Activated CD4-positive, alpha-beta T cell treated with anti-CD3 and anti-CD28 coated beads for 36 hours (primary cell): ENCODE measurements at regions of chr5 and their contacts with region 1.

Region 1: GRCh38 chr5:143002459-143003328 is 232.5 kb downstream of the ARHGAP26 start:
- DNase-seq: peak; percentile 78
- ATAC-seq: peak; percentile 92
- H3K4me3 Mint-ChIP-seq: peak overlapping the region; percentile 17
- H3K27ac Mint-ChIP-seq: peak overlapping the region; percentile 93
- H3K4me1 Mint-ChIP-seq: peaks cover 50% of the 10 kb centered on the region
- H3K27me3 Mint-ChIP-seq: no peaks in the 10 kb centered on the region

Region 2: GRCh38 chr5:142342128-142342981 is 660.3 kb before region 1 on chr5:
- CTCF ChIA-PET with region 1: no interaction called
- POLR2A ChIA-PET with region 1: no interaction called
- intact Hi-C with region 1: no loop called
- DNase-seq: no peak
- ATAC-seq: no peak
- H3K4me3 Mint-ChIP-seq: no peak overlapping the region
- H3K27ac Mint-ChIP-seq: no peak overlapping the region
- H3K4me1 Mint-ChIP-seq: no peaks in the 10 kb centered on the region
- H3K27me3 Mint-ChIP-seq: no peaks in the 10 kb centered on the region

Region 3: DNA sequence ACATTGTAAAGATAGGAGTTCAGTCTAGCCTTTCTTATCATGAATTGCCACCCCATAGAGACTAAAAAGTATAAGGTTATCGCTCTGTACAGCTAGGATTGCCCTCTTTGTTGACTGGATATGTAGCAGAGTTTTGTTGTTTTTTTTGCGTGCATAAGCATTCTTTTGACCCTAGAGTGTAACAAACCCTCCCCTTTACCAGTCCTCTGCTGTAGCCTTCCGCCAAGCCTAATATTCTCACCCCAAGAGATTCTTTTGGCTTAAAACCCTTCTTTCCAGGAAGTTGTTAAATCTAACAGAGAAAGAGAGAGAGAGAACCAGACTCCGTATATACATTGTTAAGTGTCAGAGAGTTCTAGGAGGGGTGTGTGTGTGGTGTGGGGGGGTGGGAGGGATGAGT is 430.7 kb before region 1 on chr5:
- CTCF ChIA-PET with region 1: no interaction called
- POLR2A ChIA-PET with region 1: no interaction called
- intact Hi-C with region 1: no loop called
- DNase-seq: no peak
- ATAC-seq: no peak
- H3K4me3 Mint-ChIP-seq: no peak overlapping the region
- H3K27ac Mint-ChIP-seq: no peak overlapping the region
- H3K4me1 Mint-ChIP-seq: peaks cover 8% of the 10 kb centered on the region
- H3K27me3 Mint-ChIP-seq: no peaks in the 10 kb centered on the region

Region 4: GRCh38 chr5:142922223-142922952 is 80.3 kb before region 1 on chr5:
- CTCF ChIA-PET with region 1: interaction called, 3 read pairs
- POLR2A ChIA-PET with region 1: no interaction called
- intact Hi-C with region 1: loop called (anchors 2 to 5 kb)
- DNase-seq: no peak
- ATAC-seq: no peak
- H3K4me3 Mint-ChIP-seq: no peak overlapping the region
- H3K27ac Mint-ChIP-seq: no peak overlapping the region
- H3K4me1 Mint-ChIP-seq: peaks cover 23% of the 10 kb centered on the region
- H3K27me3 Mint-ChIP-seq: no peaks in the 10 kb centered on the region

Region 5: DNA sequence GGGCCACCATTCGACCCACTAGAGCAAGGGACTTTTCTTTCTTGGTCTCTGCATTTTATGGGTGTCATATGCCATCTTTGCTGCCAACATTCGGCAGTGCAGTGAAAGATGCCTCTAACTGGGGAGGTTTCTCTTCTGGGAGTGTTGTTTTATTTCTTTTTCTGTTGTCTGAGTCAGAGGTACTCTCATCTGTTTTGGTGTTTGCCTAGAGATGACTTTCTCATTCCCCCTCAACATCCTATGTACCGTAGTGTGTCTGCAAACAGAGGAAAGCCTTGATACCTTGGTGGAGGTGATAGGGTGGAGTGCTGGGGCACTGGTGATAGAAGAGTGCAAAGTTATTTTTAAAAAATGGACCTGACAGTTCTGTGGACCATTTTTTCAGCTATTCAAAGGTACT is 50.5 kb before region 1 on chr5:
- CTCF ChIA-PET with region 1: no interaction called
- POLR2A ChIA-PET with region 1: no interaction called
- intact Hi-C with region 1: no loop called
- DNase-seq: no peak
- ATAC-seq: peak; percentile 75
- H3K4me3 Mint-ChIP-seq: no peak overlapping the region
- H3K27ac Mint-ChIP-seq: peak overlapping the region; percentile 64
- H3K4me1 Mint-ChIP-seq: peaks cover 5% of the 10 kb centered on the region
- H3K27me3 Mint-ChIP-seq: no peaks in the 10 kb centered on the region

Region 6: DNA sequence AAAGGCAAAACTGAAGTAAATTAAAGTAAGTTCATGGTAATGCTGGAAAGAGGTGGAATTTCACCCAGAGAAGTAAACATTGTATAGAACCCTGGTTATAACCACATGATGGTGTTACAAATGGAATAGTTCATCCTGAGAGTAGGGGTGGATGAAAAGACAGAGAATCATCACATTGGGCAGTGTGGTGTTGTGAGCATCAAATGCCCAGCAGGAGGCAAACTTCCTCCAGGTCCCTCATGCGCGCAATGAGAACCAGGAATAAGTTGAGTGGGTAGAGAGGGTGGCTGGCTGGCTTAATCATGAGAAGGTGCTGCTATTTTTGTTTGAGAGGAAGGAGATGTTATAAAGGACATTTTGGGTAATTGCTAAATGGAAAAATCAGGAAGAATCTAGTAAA is 646.0 kb after region 1 on chr5:
- CTCF ChIA-PET with region 1: no interaction called
- POLR2A ChIA-PET with region 1: no interaction called
- intact Hi-C with region 1: loop called in 1 of 2 experiments (anchors 5 kb)
- DNase-seq: peak; percentile 26
- ATAC-seq: no peak
- H3K4me3 Mint-ChIP-seq: no peak overlapping the region
- H3K27ac Mint-ChIP-seq: no peak overlapping the region
- H3K4me1 Mint-ChIP-seq: peaks cover 17% of the 10 kb centered on the region
- H3K27me3 Mint-ChIP-seq: no peaks in the 10 kb centered on the region